ENCODE measurements at regions of chr6 and their contacts with region 1.

Region 1: DNA sequence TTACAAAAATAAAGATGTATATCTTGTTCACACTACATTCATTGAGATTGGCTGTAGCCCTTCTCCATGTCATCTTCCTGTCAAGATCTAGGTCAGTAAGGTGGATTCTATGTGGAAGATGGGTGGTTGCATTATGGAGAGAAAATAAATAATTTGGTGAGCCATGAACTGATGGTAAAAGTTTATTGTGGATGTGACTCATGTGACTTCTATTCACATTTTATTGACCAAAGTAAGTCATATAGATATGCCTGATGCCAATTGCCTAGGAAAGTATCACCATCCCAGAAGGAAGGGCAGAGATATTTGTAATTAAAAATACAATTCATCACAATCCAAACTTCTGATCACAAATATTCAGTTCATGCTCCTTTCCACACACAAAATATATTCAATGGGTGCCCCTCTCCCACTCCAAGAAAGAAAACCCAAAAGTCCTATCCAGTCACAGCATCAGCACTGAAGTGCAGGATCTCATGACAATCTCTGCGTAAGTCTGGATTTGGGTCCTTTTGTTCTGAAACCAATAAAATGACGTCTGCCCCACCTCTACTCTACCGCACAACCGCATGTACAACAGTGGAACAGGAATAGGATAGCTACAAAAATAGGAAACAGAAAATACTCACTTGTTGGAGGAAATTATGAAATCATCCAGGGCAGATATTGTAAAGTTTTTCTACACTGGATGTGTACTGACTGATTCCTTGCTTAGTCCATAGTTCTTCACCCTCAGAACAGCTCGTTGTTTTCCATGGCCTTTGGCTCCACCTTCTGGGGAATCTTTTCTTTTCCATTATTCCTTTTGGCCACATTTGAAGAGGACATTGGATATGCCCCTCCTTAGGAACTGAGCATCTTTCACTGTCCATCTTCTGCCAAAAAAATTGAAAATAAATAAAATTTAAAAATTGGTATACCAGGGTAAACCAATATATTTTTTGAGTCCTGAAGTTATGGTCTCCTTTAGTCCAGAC is 16.1 kb upstream of the SLC17A3 start:
- DNase-seq: peak; percentile 66
- H3K4me3 Mint-ChIP-seq: no peak overlapping the region
- H3K27ac Mint-ChIP-seq: no peak overlapping the region
- H3K4me1 Mint-ChIP-seq: peaks cover 13% of the 10 kb centered on the region
- H3K27me3 Mint-ChIP-seq: no peaks in the 10 kb centered on the region
- CTCF ChIP-seq: peak; percentile 55

Region 2: GRCh38 chr6:25556516-25556915 is 333.6 kb before region 1 on chr6:
- CTCF ChIA-PET with region 1: no interaction called
- intact Hi-C with region 1: loop called (anchors 2 kb)
- DNase-seq: peak; percentile 88
- H3K4me3 Mint-ChIP-seq: no peak overlapping the region
- H3K27ac Mint-ChIP-seq: peak overlapping the region; percentile 2
- H3K4me1 Mint-ChIP-seq: peaks cover 16% of the 10 kb centered on the region
- H3K27me3 Mint-ChIP-seq: no peaks in the 10 kb centered on the region
- CTCF ChIP-seq: peak; percentile 94

Region 3: DNA sequence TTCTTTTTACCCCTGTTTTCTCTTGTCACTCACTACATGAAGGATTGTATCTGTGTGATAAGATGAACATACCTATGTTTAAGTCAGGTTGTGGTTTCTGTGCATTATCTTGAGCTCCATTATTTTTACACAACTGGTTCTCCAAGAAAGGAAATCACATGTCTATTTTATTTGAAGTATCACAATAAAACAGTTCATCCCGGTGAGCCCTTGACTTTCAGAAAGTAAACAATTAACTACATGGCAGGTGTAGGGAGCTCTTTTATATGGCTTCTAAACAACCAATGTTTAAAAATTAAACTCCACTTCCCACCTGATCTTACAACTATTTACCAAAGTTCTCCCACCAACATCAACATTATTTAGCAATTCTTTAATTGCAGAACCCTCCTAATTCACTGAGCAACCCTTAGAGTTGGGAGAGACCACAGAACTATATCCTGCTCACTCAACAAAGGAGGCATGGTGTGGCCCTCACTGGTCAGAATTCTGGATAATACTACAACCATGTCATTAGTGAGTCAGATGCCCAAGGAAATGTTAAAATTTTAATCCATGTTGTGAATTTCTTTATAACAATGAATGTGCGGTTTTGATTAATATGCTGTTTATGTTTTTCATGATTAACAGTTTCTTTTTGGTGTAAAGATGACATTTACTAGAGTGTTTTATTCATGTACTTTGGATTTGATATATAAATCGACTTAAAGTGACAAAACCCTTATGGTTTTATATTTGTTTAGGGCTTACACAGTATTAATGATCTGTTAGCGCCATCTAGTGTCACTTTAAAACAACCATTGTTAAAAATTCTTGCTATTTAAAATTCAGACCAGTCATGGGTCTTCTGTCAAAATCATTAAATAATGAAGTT is 288.1 kb before region 1 on chr6:
- CTCF ChIA-PET with region 1: no interaction called
- intact Hi-C with region 1: loop called (anchors 10 kb)
- DNase-seq: no peak
- H3K4me3 Mint-ChIP-seq: no peak overlapping the region
- H3K27ac Mint-ChIP-seq: peak overlapping the region; percentile 13
- H3K4me1 Mint-ChIP-seq: peaks cover 17% of the 10 kb centered on the region
- H3K27me3 Mint-ChIP-seq: no peaks in the 10 kb centered on the region
- CTCF ChIP-seq: peak; percentile 47

Region 4: GRCh38 chr6:25788305-25788922 is 101.8 kb before region 1 on chr6:
- CTCF ChIA-PET with region 1: interaction called, 10 read pairs
- intact Hi-C with region 1: loop called (anchors 1 kb)
- DNase-seq: peak; percentile 88
- H3K4me3 Mint-ChIP-seq: no peak overlapping the region
- H3K27ac Mint-ChIP-seq: no peak overlapping the region
- H3K4me1 Mint-ChIP-seq: no peaks in the 10 kb centered on the region
- H3K27me3 Mint-ChIP-seq: no peaks in the 10 kb centered on the region
- CTCF ChIP-seq: peak; percentile 84